ENCODE measurements at regions of chr7 and their contacts with region 1.

Region 1: GRCh38 chr7:17298207-17298839 is at the start of gene AHR:
- DNase-seq: peak; percentile 67
- H3K4me3 Mint-ChIP-seq: peak within 1 kb of the TSS; percentile 96
- H3K27ac Mint-ChIP-seq: peak within 1 kb of the TSS; percentile 95
- H3K4me1 Mint-ChIP-seq: peaks cover 23% of the 10 kb centered on the region
- H3K27me3 Mint-ChIP-seq: peaks cover 2% of the 10 kb centered on the region
- total RNA-seq, gene AHR: 34.3 and 37.2 TPM in 2 replicates

Region 2: DNA sequence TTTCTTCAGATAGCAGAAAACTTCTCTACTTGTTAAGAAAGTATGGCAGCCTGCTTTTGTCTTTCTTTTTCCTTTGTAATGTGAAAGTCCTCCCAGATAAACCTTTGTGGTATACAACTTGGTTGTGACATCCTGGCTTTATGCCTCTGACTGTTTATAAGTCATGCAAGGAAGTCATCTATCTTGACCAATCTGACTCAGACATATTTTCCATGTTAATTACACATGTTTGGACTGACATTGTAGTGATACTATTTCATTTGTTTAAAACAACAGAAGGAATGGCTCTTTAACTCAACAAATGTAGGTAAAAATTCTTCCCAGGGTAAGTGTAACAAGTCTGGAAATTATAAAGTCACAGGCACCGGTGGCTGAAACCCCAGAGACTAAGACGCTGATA is 1270.2 kb before region 1 on chr7:
- intact Hi-C with region 1: no loop called
- DNase-seq: no peak
- H3K4me3 Mint-ChIP-seq: no peak overlapping the region
- H3K27ac Mint-ChIP-seq: no peak overlapping the region
- H3K4me1 Mint-ChIP-seq: no peaks in the 10 kb centered on the region
- H3K27me3 Mint-ChIP-seq: no peaks in the 10 kb centered on the region

Region 3: DNA sequence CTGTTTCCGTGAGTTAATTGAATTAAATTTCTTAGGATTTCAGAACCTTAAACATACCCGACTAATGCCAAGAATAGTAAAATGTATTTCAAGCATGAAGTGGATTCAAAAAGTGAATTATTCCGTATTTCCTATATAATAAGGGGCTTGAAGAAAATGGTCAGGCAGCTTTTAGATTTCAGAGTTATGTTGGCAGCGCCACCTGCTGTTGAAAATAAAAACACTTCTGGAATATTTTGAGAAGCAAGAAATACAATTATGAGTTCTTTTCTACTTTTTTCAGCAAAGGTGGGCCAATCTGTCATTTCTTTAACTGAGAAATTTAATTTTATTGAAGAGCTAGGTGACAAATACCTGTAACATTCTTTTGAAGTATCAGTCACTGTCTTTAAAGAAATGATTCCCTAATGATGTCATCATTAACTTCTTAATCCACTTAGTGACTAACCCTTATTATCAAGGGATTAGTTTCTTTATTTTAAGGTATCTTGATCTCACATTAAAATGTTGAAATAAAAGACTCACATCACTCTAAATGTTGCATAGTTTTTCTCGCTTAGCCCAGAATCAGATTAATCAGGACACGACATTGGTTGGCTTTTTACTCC is 379.9 kb before region 1 on chr7:
- intact Hi-C with region 1: loop called (anchors 2 kb)
- DNase-seq: no peak
- H3K4me3 Mint-ChIP-seq: no peak overlapping the region
- H3K27ac Mint-ChIP-seq: no peak overlapping the region
- H3K4me1 Mint-ChIP-seq: peaks cover 32% of the 10 kb centered on the region
- H3K27me3 Mint-ChIP-seq: peaks cover 3% of the 10 kb centered on the region

Region 4: DNA sequence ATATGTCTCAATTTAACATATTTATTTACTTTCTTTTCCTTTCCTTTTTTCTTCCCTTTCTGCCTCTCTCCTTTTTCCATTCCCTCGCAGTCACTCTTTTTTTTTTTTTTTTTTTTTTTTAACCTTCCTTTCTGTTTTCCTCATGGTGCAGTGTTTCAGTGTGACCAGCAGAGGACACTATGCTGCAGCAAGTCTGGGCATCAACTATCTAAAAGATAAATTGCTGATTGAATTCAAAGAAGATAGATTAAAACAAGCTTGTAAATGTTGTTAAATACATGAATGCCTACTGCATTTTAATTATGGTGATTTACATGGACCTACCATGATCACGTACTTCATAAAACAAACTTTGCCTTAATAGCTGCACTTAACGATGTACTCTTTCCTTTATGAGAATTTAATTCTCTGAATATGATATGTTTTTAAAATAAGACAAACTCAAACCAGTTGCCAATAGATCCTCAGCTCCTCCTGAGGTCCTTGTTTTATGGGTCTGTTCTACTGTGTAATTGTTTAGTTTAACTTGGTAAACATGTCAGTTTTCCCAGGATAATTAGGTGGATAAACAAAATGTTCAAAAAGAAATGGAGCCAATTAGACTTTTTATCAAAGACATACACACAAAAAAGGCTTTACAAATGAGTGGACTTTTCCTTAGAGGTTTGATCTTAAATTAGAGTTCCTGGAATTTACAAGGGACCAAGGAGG is 315.5 kb before region 1 on chr7:
- intact Hi-C with region 1: loop called (anchors 1 kb)
- DNase-seq: no peak
- H3K4me3 Mint-ChIP-seq: peak overlapping the region; percentile 51
- H3K27ac Mint-ChIP-seq: no peak overlapping the region
- H3K4me1 Mint-ChIP-seq: peaks cover 17% of the 10 kb centered on the region
- H3K27me3 Mint-ChIP-seq: peaks cover 49% of the 10 kb centered on the region

Region 5: DNA sequence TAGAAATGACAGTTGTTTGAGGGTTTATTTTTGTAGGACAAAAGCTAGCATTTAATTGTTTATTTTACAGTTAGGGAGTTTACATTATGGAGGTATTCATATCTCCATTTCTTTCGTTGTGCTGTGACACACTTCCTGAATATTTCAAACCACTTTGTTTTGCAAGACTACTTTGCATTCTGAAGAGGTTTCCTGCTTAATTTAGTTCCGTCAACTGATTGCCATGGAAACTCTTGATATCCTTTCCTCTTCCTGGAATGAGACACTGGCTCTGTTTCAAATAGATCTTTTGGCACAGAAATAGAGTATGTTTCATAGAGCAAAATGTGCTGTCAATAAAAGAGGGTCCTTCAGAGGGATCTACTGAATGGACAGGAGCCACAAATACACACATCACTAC is 257.0 kb before region 1 on chr7:
- intact Hi-C with region 1: loop called (anchors 5 kb)
- DNase-seq: no peak
- H3K4me3 Mint-ChIP-seq: peak overlapping the region; percentile 13
- H3K27ac Mint-ChIP-seq: peak overlapping the region; percentile 57
- H3K4me1 Mint-ChIP-seq: peaks cover 53% of the 10 kb centered on the region
- H3K27me3 Mint-ChIP-seq: peaks cover 2% of the 10 kb centered on the region

Region 6: DNA sequence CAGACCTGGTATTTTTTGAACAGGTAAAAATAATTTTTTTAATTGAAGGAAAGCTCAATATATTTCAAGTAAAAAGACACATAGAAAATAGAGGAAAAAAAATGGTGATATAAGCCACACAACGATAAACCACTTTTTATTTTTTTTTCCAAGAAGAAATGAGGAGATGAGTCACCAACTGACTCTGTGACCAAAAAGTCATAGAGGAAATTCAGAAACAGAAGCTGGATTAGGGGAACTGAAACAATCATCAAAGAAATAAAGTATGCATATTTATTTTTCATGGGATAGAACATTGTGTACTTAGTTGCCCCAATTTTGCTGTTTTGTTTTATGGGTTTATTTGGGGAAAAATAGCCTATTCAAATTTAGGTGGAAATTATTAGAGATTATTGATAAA is 239.8 kb before region 1 on chr7:
- intact Hi-C with region 1: no loop called
- DNase-seq: no peak
- H3K4me3 Mint-ChIP-seq: no peak overlapping the region
- H3K27ac Mint-ChIP-seq: no peak overlapping the region
- H3K4me1 Mint-ChIP-seq: peaks cover 36% of the 10 kb centered on the region
- H3K27me3 Mint-ChIP-seq: no peaks in the 10 kb centered on the region

Region 7: GRCh38 chr7:17159500-17160037 is 138.8 kb before region 1 on chr7:
- intact Hi-C with region 1: loop called (anchors 2 kb)
- DNase-seq: no peak
- H3K4me3 Mint-ChIP-seq: no peak overlapping the region
- H3K27ac Mint-ChIP-seq: peak overlapping the region; percentile 36
- H3K4me1 Mint-ChIP-seq: peaks cover 50% of the 10 kb centered on the region
- H3K27me3 Mint-ChIP-seq: no peaks in the 10 kb centered on the region

Region 8: GRCh38 chr7:17523813-17524741 is 225.8 kb after region 1 on chr7:
- intact Hi-C with region 1: loop called (anchors 10 kb)
- DNase-seq: no peak
- H3K4me3 Mint-ChIP-seq: no peak overlapping the region
- H3K27ac Mint-ChIP-seq: no peak overlapping the region
- H3K4me1 Mint-ChIP-seq: peaks cover 20% of the 10 kb centered on the region
- H3K27me3 Mint-ChIP-seq: peaks cover 1% of the 10 kb centered on the region